ENCODE measurements at regions of chr17 and their contacts with region 1.

Region 1: DNA sequence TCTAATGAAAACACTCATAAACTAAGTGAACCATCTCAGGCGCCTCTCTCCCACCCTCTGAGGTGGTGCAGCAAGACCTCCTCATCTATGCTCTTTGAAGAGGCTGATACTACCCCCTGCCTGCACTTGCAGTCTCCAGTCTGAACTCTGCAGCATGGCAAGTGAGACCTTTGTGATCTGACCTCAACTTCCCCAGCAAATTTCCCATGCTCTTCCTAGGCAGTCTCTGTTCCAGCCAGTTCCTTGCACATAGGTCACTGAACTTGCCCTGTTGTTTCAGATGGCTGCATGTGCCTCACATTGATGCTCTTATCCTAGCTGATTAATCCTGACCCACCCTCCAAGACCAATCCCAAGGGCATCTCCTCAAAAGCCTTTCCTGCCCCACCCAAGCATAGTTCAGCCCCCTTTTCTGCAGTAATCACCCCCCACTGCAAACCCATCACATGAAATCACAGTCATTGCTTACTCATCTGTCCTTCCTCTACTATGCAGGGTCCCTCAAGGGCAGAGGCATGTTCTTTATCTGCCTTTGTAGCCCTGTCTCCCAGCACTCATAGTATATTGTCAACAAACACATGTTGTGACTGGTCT is 42.0 kb downstream of the TBX21 start:
- DNase-seq: no peak
- H3K4me3 ChIP-seq: no peak overlapping the region
- CTCF ChIP-seq: no peak
- POLR2A ChIP-seq: no peak

Region 2: GRCh38 chr17:45965812-45966211 is 1809.3 kb before region 1 on chr17:
- intact Hi-C with region 1: loop called (anchors 5 kb)
- DNase-seq: no peak
- H3K4me3 ChIP-seq: no peak overlapping the region
- CTCF ChIP-seq: no peak
- POLR2A ChIP-seq: no peak

Region 3: DNA sequence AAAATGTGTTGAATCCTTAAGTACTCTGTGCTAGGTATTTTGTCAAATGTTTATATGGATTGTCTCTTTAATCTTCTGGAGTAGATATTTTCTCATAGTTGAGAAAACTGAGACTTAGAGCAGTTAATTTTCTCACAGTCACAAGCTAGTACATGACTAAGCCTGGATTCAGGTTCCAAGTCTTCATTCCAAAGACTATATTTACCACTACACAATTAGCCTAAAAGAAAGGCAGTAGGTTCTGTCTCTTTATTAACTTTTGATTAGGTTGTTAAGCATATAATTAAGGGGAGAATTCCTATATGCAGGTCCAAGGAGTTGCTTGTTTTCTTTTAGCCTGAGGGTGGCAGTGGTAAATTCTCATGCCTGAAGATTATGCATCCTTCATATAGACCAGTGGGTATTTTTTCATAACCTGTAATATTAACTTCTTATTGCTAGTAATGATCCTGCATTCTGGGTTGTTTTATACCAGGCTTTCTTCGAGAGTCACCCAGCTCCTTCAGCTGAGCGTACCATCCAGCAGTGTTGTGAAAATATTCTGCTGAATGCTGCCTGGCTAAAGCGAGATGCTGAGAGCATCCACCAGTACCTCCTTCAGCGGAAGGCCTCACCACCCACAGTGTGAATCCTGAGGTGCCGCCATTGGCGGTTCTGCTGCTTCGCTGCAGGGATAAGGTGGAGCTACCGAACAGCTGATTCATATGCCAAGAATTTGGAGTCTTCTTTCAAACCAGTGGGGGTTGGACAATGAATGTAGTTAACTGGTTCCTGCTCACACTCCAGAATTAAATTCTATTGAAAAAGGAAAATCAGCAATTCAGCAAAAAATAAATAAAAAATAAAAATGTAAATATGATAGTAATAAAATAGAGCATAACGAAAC is 153.5 kb before region 1 on chr17:
- intact Hi-C with region 1: no loop called
- DNase-seq: no peak
- H3K4me3 ChIP-seq: no peak overlapping the region
- CTCF ChIP-seq: no peak
- POLR2A ChIP-seq: no peak